AG04450 (cell line): ENCODE measurements at regions of chr17 and their contacts with region 1.

Region 1: GRCh38 chr17:44218344-44219107 is 949 bp downstream of the UBTF start:
- DNase-seq: peak; percentile 75
- H3K4me3 ChIP-seq: peak overlapping the region; percentile 83
- H3K27ac ChIP-seq: peak overlapping the region; percentile 47
- H3K27me3 ChIP-seq: no peaks in the 10 kb centered on the region
- CTCF ChIP-seq: peak; percentile 52

Region 2: DNA sequence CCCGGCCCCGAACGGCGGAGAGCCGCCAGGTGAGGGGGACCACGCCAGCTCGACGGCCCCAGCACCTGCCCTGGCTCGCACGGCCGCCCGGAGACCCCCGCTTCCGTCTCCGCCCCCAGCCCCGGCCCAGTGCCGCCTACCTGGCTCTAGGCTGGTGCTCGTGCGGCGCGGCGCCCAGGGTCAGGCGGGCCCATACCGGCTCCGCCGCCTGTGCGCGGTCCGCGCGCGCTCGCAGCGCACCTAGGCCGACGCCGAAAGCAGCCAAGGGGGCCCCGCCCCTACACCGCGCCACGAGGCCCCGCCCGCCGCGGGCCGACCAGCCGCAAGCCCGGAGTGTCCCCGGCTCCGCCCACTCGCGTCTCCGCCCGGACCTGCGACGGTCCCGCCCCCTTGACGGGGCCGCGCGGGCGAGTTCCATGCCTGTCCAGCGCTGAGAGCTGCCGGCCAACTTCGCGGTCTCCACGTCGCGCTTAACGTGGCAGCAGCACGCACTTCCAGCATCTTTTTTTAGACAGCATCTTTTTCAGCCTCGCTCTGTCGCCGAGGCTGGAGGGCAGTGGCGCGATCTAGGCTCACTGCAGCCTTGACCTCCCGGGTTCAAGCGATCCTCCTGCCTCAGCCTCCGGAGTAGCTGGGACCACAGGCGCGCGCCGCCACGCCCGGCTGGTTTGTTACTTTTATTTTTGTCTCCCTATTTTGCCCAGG is 106.2 kb after region 1 on chr17 and contains the start of gene SLC25A39:
- CTCF ChIA-PET with region 1: interaction called, 3 read pairs
- POLR2A ChIA-PET with region 1: interaction called, 11 read pairs
- DNase-seq: peak; percentile 78
- H3K4me3 ChIP-seq: peak within 1 kb of the TSS; percentile 80
- H3K27ac ChIP-seq: peak within 1 kb of the TSS; percentile 65
- H3K27me3 ChIP-seq: no peaks in the 10 kb centered on the region
- CTCF ChIP-seq: no peak
- polyA plus RNA-seq, gene SLC25A39: 32.1 and 43.4 TPM in 2 replicates